OCI-LY7 (cell line): ENCODE measurements at regions of chr10 and their contacts with region 1.

Region 1: GRCh38 chr10:79084012-79084971 is 15.5 kb downstream of the ZMIZ1 start:
- DNase-seq: peak; percentile 70
- H3K4me3 ChIP-seq: peak overlapping the region; percentile 52
- H3K27ac ChIP-seq: peak overlapping the region; percentile 57
- H3K4me1 ChIP-seq: peaks cover 93% of the 10 kb centered on the region
- CTCF ChIP-seq: no peak

Region 2: GRCh38 chr10:79101560-79102497 is 17.5 kb after region 1 on chr10:
- CTCF ChIA-PET with region 1: interaction called, 5 read pairs
- POLR2A ChIA-PET with region 1: interaction called, 25 read pairs
- intact Hi-C with region 1: loop called (anchors 1 kb)
- DNase-seq: peak; percentile 57
- H3K4me3 ChIP-seq: peak overlapping the region; percentile 27
- H3K27ac ChIP-seq: peak overlapping the region; percentile 46
- H3K4me1 ChIP-seq: peaks cover 78% of the 10 kb centered on the region
- CTCF ChIP-seq: no peak

Region 3: GRCh38 chr10:79149662-79150443 is 65.6 kb after region 1 on chr10:
- CTCF ChIA-PET with region 1: interaction called, 10 read pairs
- POLR2A ChIA-PET with region 1: no interaction called
- intact Hi-C with region 1: no loop called
- DNase-seq: peak; percentile 48
- H3K4me3 ChIP-seq: no peak overlapping the region
- H3K27ac ChIP-seq: no peak overlapping the region
- H3K4me1 ChIP-seq: peaks cover 33% of the 10 kb centered on the region
- CTCF ChIP-seq: no peak